Posterior cingulate gyrus (tissue), 11 donors: ENCODE measurements at regions of chr11 and their contacts with region 1.

Region 1: DNA sequence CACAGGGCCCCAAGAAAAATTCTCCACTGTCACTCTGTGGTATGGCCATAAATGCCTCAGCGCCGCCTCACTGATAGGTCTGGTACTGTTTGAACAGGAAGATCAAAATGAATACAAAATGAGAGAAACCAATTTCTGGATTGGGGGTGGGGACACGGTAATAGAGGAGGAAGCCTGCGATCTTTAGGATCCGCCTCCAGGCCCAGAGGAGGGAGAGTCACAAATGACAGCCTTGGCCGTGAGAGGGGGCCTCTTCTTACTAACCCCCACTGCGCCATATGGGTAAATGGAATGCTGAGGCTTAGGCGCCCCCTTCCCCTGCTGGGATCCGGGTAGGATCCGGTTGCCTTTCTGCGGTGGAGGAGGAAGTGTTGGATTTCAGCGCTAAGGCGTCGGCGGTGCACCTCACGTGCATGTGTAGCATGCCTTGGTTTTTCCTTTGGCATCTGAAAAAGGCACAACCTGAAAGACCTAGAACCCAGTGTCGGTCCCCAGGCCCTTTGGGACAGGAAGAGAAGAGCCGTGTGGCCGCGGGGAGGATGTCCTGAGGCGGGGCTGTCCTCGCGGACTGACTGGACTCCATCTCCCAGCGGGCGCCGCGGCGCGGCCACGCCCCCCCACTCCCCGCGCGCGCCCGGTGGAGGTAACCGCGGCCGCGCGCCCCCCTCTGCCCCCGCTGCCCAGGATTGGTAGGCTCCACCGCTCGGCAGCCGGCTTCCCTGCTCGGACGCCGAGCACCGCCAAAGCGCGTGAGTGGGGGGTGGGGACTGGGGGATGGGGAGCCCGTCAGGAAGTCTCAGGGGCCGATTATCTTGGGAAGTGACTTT is 718 bp upstream of the MADD start:
- DNase-seq: peak; percentile 70 to 98 (median 85)

Region 2: DNA sequence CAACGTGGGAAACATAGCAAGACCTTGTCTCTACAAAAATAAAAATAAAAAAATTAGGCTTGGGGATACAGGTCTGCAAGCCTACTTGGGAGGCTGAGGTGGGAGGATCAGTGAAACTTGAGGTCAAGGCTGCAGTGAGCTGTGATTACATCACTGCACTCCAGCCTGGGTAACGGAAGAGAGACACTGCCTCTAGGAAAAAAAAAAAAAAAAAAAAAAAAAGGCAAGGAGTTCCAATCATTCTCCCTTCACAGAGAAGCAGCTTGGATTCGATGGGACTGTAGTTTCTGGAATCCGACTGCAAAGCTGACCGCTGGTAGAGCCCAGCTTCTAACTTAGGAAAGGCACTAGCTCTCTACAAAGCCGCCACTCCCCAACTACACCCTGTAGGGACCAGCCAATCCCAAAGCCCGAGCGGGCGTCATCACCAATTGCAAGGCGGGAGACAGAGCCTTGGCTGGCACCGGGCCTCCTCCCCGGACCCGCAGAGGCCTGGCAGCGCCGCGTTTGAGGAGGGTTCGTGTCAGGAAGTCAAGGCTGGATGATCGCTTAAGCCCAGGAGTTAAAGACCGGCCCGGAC is 55.1 kb before region 1 on chr11:
- intact Hi-C with region 1: loop called (anchors 2 kb)
- DNase-seq: peak; percentile 92 to 99 (median 96)

Region 3: DNA sequence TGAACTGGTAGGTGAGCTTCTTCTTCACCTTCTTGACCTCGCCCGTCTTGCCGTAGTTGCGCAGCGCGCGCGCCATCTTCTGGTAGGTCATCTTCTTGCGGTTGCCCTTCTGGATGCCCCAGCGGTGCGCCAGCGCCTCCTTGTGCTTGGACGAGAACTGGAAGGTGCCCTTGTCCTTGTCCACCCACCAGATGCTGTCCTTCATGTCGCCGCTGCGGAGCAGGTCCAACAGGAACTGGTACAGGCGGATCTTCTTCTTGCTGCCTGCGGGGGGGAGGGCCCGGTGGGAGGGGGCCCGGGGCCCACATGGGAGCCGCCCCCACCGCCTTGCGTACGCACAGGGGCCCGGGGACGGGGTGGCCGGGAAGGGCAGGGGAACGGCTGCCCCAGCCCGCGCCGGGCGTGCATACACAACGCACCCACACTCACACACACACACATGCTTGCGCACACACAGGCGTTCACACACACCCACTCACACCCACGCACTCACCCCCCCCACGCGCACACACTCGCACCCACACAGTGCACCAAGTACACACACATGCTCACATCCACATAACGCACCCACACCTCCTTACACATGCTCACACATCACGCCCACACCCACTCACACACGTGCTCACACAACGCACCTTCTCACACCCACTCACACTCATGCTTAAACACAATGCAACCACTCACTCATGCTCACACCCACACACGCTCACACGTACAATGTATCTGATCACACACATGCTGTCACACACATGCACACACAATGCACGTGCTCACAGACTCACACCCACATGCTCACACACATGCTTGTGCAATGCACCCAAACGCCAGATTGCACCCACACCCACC is 86.3 kb after region 1 on chr11:
- intact Hi-C with region 1: loop called (anchors 10 kb)
- DNase-seq: peak; percentile 82 to 99 (median 93)

Region 4: DNA sequence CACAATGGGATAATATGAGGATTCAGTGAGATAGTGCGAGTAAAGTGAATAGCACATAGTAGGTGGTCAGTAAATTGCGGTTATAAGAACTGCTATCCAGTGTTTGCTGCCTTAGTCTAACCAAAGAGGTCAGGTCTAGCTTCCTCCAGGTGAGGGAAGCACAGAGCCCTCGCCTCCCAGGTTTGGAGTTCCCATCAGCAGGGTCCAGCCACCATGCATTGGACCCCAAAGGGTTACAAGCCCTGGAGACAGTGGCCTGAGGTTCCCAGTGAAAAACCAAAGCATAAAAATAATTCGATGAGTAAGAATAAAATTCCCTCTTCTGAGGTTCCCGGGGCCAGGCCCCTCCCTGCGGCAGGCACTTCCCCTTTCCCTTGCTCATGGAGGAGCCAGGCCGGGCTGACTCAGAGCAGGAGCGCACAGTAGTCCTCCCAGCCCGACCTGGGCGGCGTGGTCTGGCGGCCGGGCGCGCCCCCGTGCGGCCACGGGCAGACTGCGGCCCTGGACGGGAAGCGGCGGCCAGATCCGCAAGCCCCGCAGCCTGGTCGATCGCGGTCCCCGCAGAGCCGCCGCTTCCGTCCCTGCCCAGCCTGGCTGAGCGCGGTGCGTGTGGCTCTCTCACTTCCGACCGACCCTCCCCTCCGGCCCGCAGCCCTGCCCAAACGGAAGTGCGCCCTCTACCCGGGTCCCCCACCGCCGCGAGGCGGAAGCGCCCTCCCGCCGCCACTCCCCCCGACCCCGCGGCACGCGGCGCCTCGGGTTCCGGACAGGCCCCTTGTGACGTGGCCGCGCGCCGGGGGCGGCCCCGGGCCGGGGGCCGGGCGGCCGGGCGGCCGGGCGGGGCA is 138.8 kb after region 1 on chr11 and contains the start of gene SLC39A13:
- intact Hi-C with region 1: loop called (anchors 2 kb)
- DNase-seq: peak; percentile 86 to 99 (median 92)